ENCODE measurements at regions of chr1 and their contacts with region 1.

Region 1: GRCh38 chr1:45011837-45012638 is at the start of gene UROD:
- DNase-seq: peak; percentile 61 to 94 (median 89)
- ATAC-seq: peak; percentile 93
- H3K4me3 ChIP-seq: peak within 1 kb of the TSS; percentile 65
- H3K4me3 Mint-ChIP-seq: peak within 1 kb of the TSS; percentile 90 to 100 (median 93)
- H3K27ac ChIP-seq: peak within 1 kb of the TSS; percentile 81
- H3K27ac Mint-ChIP-seq: peak within 1 kb of the TSS; percentile 89 to 98 (median 94)
- H3K4me1 ChIP-seq: peaks cover 28 to 30% of the 10 kb centered on the region in 2 donors
- H3K4me1 Mint-ChIP-seq: peaks cover 29 to 64% (median 57%) of the 10 kb centered on the region in 7 donors
- H3K27me3 ChIP-seq: no peaks in the 10 kb centered on the region
- H3K27me3 Mint-ChIP-seq: no peaks in the 10 kb centered on the region
- total RNA-seq, gene UROD: 40.7 to 72.8 (median 58.1) TPM

Region 2: DNA sequence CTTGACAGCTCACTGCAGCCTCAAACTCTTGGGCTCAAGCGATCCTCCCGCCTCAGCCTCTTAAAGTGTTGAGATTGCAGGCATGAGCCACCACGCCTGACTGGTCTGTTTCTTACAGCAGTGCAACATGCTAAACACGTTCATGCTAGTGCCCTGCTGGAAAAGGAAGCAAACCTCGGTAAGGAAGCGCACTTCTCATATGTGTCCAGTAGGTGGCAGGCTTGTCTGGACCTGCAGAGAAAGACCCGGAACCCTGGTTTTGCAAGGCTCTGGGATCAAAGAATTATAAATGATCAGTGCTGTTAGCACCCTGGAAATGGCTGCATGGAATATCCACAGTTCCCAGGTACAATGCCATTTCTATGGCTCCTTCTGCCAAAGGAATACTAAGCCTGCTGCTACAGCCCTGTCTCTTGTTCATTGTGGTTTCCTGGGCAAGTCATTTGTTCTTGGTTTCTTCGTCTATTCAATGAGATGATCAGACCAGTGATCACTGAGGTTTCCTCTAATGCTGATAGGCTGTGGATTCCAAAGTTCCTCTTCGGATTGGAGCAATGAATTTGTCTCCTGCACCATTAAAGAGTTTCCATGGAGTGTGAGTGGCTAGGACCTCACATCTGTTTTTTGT is 297.0 kb before region 1 on chr1:
- CTCF ChIA-PET with region 1: no interaction called
- POLR2A ChIA-PET with region 1: interaction called, 5 read pairs
- intact Hi-C with region 1: loop called in 1 of 2 experiments (anchors 1 kb)
- DNase-seq: peak; percentile 46 to 77 (median 69)
- ATAC-seq: peak; percentile 98
- H3K4me3 ChIP-seq: peak overlapping the region; percentile 28
- H3K4me3 Mint-ChIP-seq: peak overlapping the region; percentile 24 to 72 (median 66)
- H3K27ac ChIP-seq: peak overlapping the region; percentile 39
- H3K27ac Mint-ChIP-seq: peak overlapping the region; percentile 40 to 85 (median 68)
- H3K4me1 ChIP-seq: peaks cover 11 to 37% of the 10 kb centered on the region in 2 donors
- H3K4me1 Mint-ChIP-seq: peaks cover 39 to 52% (median 47%) of the 10 kb centered on the region in 7 donors
- H3K27me3 ChIP-seq: no peaks in the 10 kb centered on the region
- H3K27me3 Mint-ChIP-seq: peaks cover 0 to 9% (median 0%) of the 10 kb centered on the region in 5 donors

Region 3: GRCh38 chr1:44775078-44775929 is 236.7 kb before region 1 on chr1 and contains the start of gene RPS8:
- CTCF ChIA-PET with region 1: interaction called, 3 read pairs
- POLR2A ChIA-PET with region 1: interaction called, 25 read pairs
- intact Hi-C with region 1: loop called (anchors 1 kb)
- DNase-seq: peak; percentile 77 to 92 (median 90)
- ATAC-seq: peak; percentile 91
- H3K4me3 ChIP-seq: peak within 1 kb of the TSS; percentile 99
- H3K4me3 Mint-ChIP-seq: peak within 1 kb of the TSS; percentile 88 to 99 (median 92)
- H3K27ac ChIP-seq: peak within 1 kb of the TSS; percentile 89
- H3K27ac Mint-ChIP-seq: peak within 1 kb of the TSS; percentile 91 to 98 (median 94)
- H3K4me1 ChIP-seq: peaks cover 6 to 19% of the 10 kb centered on the region in 2 donors
- H3K4me1 Mint-ChIP-seq: peaks cover 20 to 45% (median 38%) of the 10 kb centered on the region in 7 donors
- H3K27me3 ChIP-seq: no peaks in the 10 kb centered on the region
- H3K27me3 Mint-ChIP-seq: no peaks in the 10 kb centered on the region
- total RNA-seq, gene RPS8: 2,000 to 3,409 (median 3,025) TPM

Region 4: DNA sequence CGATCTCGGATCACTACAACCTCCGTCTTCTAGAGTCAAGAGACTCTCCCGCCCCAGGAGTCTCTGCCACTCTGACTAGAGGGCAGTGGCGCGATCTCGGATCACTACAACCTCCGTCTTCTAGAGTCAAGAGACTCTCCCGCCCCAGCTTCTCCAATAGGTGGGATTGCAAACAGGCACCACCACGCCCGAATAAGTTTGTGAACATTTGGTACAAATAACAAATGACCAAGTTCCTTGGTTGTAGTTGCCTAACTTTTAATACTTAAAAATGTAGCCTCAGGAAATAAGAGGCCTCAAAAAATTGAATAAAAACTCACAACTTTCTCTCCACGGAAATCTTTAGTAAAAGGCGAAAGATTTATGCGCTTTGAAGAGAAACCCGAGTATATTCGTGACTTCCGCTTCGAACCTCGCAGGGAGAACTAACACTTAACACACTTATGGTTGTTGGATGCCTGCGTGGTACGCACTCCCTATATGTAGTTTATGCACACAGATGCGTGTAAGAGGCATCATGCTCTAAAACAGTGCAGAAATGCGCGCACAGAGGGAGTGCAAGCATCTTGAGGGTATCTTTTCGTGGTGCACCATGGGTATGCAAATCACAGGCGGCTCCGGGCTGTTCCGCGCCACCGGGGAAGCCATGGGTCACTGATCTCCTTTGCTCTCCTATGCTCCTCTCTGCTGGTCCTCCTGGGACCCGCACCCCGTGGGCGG is 192.3 kb before region 1 on chr1:
- CTCF ChIA-PET with region 1: no interaction called
- POLR2A ChIA-PET with region 1: interaction called, 30 read pairs
- intact Hi-C with region 1: loop called in 1 of 2 experiments (anchors 5 kb)
- DNase-seq: peak; percentile 75 to 91 (median 86)
- ATAC-seq: peak; percentile 86
- H3K4me3 ChIP-seq: peak overlapping the region; percentile 66
- H3K4me3 Mint-ChIP-seq: peak overlapping the region; percentile 91 to 96 (median 94)
- H3K27ac ChIP-seq: peak overlapping the region; percentile 92
- H3K27ac Mint-ChIP-seq: peak overlapping the region; percentile 99 to 100 (median 100)
- H3K4me1 ChIP-seq: peaks cover 0 to 21% of the 10 kb centered on the region in 2 donors
- H3K4me1 Mint-ChIP-seq: peaks cover 31 to 48% (median 45%) of the 10 kb centered on the region in 7 donors
- H3K27me3 ChIP-seq: no peaks in the 10 kb centered on the region
- H3K27me3 Mint-ChIP-seq: no peaks in the 10 kb centered on the region

Region 5: GRCh38 chr1:45038661-45039364 is 26.8 kb after region 1 on chr1:
- CTCF ChIA-PET with region 1: no interaction called
- POLR2A ChIA-PET with region 1: no interaction called
- intact Hi-C with region 1: no loop called
- DNase-seq: no peak
- ATAC-seq: no peak
- H3K4me3 ChIP-seq: no peak overlapping the region
- H3K4me3 Mint-ChIP-seq: no peak overlapping the region
- H3K27ac ChIP-seq: no peak overlapping the region
- H3K27ac Mint-ChIP-seq: no peak overlapping the region
- H3K4me1 ChIP-seq: no peaks in the 10 kb centered on the region
- H3K4me1 Mint-ChIP-seq: peaks cover 0 to 7% (median 0%) of the 10 kb centered on the region in 7 donors
- H3K27me3 ChIP-seq: no peaks in the 10 kb centered on the region
- H3K27me3 Mint-ChIP-seq: no peaks in the 10 kb centered on the region

Region 6: GRCh38 chr1:45230540-45230939 is 218.5 kb after region 1 on chr1:
- CTCF ChIA-PET with region 1: interaction called, 11 read pairs
- POLR2A ChIA-PET with region 1: interaction called, 3 read pairs
- intact Hi-C with region 1: no loop called
- DNase-seq: peak in 6 of 9 donors; percentile 5 to 49 (median 22)
- ATAC-seq: peak; percentile 49
- H3K4me3 ChIP-seq: no peak overlapping the region
- H3K4me3 Mint-ChIP-seq: no peak overlapping the region
- H3K27ac ChIP-seq: no peak overlapping the region
- H3K27ac Mint-ChIP-seq: peak overlapping the region in 1 of 9 donors; percentile 15
- H3K4me1 ChIP-seq: no peaks in the 10 kb centered on the region
- H3K4me1 Mint-ChIP-seq: no peaks in the 10 kb centered on the region
- H3K27me3 ChIP-seq: no peaks in the 10 kb centered on the region
- H3K27me3 Mint-ChIP-seq: peaks cover 0 to 4% (median 0%) of the 10 kb centered on the region in 5 donors

Region 7: GRCh38 chr1:45499415-45499769 is 487.4 kb after region 1 on chr1:
- CTCF ChIA-PET with region 1: interaction called, 77 read pairs
- POLR2A ChIA-PET with region 1: interaction called, 15 read pairs
- intact Hi-C with region 1: loop called in 1 of 2 experiments (anchors 1 kb)
- DNase-seq: peak in 1 of 9 donors; percentile 17
- ATAC-seq: no peak
- H3K4me3 ChIP-seq: peak overlapping the region; percentile 68
- H3K4me3 Mint-ChIP-seq: peak overlapping the region; percentile 91 to 99 (median 94)
- H3K27ac ChIP-seq: peak overlapping the region; percentile 70
- H3K27ac Mint-ChIP-seq: peak overlapping the region; percentile 87 to 97 (median 92)
- H3K4me1 ChIP-seq: peaks cover 5 to 17% of the 10 kb centered on the region in 2 donors
- H3K4me1 Mint-ChIP-seq: peaks cover 24 to 38% (median 33%) of the 10 kb centered on the region in 7 donors
- H3K27me3 ChIP-seq: no peaks in the 10 kb centered on the region
- H3K27me3 Mint-ChIP-seq: no peaks in the 10 kb centered on the region

Measured in naive thymus-derived CD4-positive, alpha-beta T cell (primary cell).